Activated CD4-positive, alpha-beta memory T cell treated with anti-CD3 and anti-CD28 coated beads for 36 hours (primary cell): ENCODE measurements at regions of chr13 and their contacts with region 1.

Region 1: GRCh38 chr13:31050486-31051400 is 111.0 kb downstream of the HSPH1 start:
- DNase-seq: peak; percentile 43
- H3K4me3 Mint-ChIP-seq: no peak overlapping the region
- H3K27ac Mint-ChIP-seq: peak overlapping the region; percentile 26
- H3K4me1 Mint-ChIP-seq: peaks cover 21% of the 10 kb centered on the region
- H3K27me3 Mint-ChIP-seq: peaks cover 8% of the 10 kb centered on the region

Region 2: GRCh38 chr13:30364876-30365275 is 685.9 kb before region 1 on chr13:
- CTCF ChIA-PET with region 1: no interaction called
- POLR2A ChIA-PET with region 1: no interaction called
- intact Hi-C with region 1: no loop called
- DNase-seq: no peak
- H3K4me3 Mint-ChIP-seq: no peak overlapping the region
- H3K27ac Mint-ChIP-seq: no peak overlapping the region
- H3K4me1 Mint-ChIP-seq: peaks cover 17% of the 10 kb centered on the region
- H3K27me3 Mint-ChIP-seq: no peaks in the 10 kb centered on the region

Region 3: DNA sequence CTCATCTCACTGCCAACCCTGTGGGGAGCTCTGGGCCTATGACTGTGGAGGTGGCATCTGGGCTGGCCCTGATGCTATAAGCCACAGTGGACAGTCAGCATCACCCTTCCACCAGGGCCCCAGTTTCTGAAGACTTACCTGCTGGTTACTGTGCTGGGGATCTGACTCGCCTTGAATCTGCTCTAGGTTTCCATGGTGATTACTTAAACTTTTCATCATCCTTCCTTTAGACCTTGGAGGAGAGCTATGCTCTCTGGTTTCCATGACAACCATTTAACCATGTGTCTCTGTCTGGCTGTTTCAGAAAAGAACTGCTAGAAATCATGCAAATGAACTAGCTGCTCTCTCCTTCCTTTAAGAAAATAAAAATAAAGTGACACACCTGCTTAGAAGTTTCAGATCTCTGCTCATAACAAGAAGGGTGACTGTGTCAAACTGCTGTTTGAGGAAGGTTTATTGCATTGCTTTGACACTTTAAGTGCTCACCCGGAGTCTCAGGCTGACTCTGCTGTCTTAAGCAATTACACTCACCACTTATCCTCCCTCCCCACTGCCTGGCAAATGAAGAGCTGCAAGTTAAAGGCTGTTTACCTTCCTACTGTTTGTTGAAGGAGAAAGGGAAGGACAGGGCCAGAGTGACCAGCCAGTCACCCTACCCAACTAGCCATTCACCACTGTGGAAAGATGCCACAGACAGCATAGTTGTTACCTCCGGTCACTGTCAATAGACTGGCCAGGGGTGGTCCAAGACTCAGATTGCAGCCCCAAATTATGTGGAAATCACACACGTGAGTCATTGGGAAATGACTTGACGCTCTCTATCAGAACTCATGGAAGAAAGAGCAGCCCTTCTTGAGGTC is 23.3 kb after region 1 on chr13:
- CTCF ChIA-PET with region 1: interaction called, 23 read pairs
- POLR2A ChIA-PET with region 1: interaction called, 9 read pairs
- intact Hi-C with region 1: loop called (anchors 1 kb)
- DNase-seq: peak; percentile 82
- H3K4me3 Mint-ChIP-seq: no peak overlapping the region
- H3K27ac Mint-ChIP-seq: peak overlapping the region; percentile 62
- H3K4me1 Mint-ChIP-seq: peaks cover 13% of the 10 kb centered on the region
- H3K27me3 Mint-ChIP-seq: peaks cover 9% of the 10 kb centered on the region

Region 4: DNA sequence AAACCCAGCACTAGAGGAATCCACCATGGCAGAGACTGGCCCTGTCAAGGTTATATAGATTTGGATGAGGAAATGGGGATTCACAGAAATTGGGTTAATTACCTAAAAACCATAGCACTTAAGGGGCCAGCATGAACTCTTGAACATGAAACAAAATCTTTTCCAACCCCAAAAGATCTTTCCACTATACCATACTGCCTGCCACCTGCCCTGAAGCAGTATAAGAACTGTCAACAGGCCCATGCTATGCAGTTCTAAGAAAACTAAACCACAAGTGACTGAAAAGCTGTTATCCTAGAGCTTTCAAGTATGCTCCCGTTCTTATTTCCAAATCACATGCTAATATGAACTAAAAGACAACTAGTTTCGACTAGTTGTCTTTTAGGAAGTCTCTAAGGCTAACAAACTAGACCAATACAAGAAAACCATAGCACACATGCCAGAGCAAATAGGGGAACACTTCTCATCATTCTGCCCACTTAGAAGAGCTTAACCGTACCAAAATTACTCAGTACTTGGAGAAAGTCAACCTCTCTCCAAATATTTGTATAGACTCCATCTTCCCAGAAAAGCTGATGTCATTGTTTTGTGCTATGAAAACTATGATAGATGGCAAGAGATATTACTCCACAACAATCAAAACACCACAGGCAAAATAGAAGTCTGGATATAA is 83.4 kb after region 1 on chr13:
- CTCF ChIA-PET with region 1: no interaction called
- POLR2A ChIA-PET with region 1: no interaction called
- intact Hi-C with region 1: loop called (anchors 2 kb)
- DNase-seq: no peak
- H3K4me3 Mint-ChIP-seq: no peak overlapping the region
- H3K27ac Mint-ChIP-seq: peak overlapping the region; percentile 50
- H3K4me1 Mint-ChIP-seq: peaks cover 48% of the 10 kb centered on the region
- H3K27me3 Mint-ChIP-seq: no peaks in the 10 kb centered on the region